AG04450 (cell line): ENCODE measurements at regions of chr7 and their contacts with region 1.

Region 1: DNA sequence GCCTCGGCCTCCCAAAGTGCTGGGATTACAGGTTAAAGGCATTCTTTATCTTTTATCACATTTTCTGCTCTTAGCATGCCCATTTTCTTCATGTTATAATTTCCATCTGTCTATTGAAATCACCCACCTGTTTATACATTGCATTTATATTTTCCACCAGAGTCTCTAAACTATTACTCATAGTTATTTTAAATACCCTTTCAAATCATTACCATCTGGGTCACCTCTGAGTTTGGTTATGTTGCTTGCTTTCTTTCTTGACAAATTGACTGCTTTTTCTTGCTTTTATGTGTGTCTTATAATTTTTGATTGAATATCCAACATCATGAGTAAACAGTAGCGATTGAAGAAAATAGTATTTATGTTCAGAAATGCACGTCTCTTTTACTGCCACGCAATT is 71.4 kb downstream of the TMEM270 start:
- DNase-seq: no peak
- H3K4me3 ChIP-seq: no peak overlapping the region
- H3K27ac ChIP-seq: no peak overlapping the region
- H3K27me3 ChIP-seq: no peaks in the 10 kb centered on the region
- CTCF ChIP-seq: no peak

Region 2: DNA sequence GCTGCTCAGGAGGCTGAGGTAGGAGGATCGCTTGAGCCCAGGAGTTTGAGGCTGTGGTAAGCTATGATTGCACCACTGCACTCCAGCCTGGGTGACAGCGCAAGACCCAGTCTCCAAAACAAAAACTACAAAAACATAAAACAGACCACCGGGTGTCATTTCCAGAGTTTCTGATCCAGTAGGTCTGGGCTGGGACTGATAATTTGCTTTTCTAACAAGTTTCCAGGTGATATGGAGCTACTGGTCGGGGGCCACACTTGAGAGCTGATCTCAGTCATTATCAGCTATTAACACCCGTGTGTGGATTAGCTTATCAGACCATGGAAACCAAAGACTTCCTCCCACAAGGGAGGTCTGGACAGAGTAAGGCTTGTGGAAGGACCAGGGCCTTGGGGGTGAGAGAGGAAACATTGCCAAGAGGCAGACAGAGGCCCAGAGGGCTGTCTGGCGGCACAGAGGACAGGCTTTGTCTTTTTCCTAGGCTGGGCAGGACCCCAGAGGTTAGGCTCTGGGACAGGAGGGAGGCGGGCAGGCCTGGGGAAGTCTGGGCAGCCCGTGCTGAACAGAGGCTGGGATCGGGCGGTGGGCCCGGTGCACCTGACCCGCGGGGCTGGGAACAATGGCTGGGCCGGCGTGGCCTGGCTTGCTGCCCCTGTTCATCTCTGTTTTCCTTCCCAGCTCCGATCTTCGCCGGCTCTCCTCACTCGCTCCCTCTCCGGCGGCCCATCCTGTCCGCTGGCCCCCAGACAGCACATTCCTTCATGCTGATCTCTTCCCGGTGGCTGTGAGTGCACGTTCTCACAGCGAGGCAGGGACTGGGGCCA is 46.2 kb before region 1 on chr7:
- CTCF ChIA-PET with region 1: interaction called, 14 read pairs
- POLR2A ChIA-PET with region 1: no interaction called
- DNase-seq: no peak
- H3K4me3 ChIP-seq: no peak overlapping the region
- H3K27ac ChIP-seq: peak overlapping the region; percentile 68
- H3K27me3 ChIP-seq: peaks cover 3% of the 10 kb centered on the region
- CTCF ChIP-seq: no peak